ENCODE measurements at regions of chr9 and their contacts with region 1.

Region 1: GRCh38 chr9:136488247-136489214 is 5.7 kb upstream of the SEC16A start:
- DNase-seq: peak; percentile 90
- ATAC-seq: peak; percentile 26

Region 2: GRCh38 chr9:136267261-136268111 is 221.0 kb before region 1 on chr9:
- intact Hi-C with region 1: no loop called
- DNase-seq: peak; percentile 93
- ATAC-seq: peak; percentile 97

Region 3: DNA sequence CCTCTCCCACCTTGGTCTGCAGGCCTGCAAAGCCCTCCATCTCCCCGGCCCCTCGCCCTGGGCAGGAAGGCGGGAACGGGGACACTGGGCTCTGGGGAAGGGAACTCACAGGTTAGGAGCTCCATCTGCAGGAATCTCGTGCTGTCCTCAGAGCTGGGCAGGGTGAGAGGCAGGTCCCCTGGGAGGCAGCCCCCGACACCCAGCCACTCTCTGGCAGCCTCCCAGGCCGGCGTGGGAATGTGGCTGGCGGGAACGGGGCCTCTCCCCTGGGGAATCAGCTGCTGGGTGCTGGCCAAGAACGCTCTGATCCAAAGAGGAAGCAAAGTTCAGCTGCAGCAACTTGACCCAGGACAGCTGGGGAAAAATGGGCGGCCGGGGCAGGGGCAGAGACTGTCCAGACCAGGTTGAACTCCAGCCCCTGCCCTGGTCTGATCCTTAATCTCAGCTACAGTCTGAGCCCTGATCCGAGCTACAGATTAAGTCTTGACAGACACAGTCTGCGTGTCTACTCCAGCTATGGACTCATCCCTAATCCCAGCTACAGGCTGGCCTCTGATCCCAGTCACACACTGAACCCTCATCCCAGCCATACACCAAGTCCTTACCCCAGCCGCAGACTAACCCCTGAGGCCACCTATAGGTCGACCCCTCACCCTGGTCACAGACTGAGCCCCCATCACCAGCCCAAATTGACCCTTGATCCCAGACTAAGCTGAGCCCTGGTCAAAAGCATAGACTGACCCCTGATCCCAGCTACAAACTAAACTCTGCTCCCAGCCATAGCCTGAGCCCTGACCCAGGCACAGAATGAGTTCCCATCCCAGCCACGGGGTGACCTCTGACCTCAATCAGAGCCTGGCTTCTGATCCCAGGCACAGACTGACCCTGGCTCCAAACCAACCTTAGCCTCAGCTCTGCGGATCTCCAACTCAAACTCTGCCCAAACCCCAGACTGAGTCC is 136.8 kb after region 1 on chr9:
- intact Hi-C with region 1: loop called (anchors 1 kb)
- DNase-seq: peak; percentile 91
- ATAC-seq: peak; percentile 77